B cell (primary cell): ENCODE measurements at regions of chr7 and their contacts with region 1.

Region 1: GRCh38 chr7:95527033-95527775 is 41.5 kb downstream of the ASB4 start:
- DNase-seq: peak; percentile 69
- ATAC-seq: peak; percentile 69
- H3K4me3 ChIP-seq: no peak overlapping the region
- H3K4me3 Mint-ChIP-seq: no peak overlapping the region
- H3K27ac ChIP-seq: no peak overlapping the region
- H3K27ac Mint-ChIP-seq: no peak overlapping the region
- H3K4me1 ChIP-seq: no peaks in the 10 kb centered on the region
- H3K4me1 Mint-ChIP-seq: peaks cover 3% of the 10 kb centered on the region
- H3K27me3 ChIP-seq: no peaks in the 10 kb centered on the region
- H3K27me3 Mint-ChIP-seq: peaks cover 8% of the 10 kb centered on the region
- CTCF ChIP-seq: peak; percentile 91

Region 2: GRCh38 chr7:95485391-95486123 is 41.6 kb before region 1 on chr7 and contains the start of gene ASB4:
- CTCF ChIA-PET with region 1: no interaction called
- POLR2A ChIA-PET with region 1: no interaction called
- intact Hi-C with region 1: no loop called
- DNase-seq: no peak
- ATAC-seq: no peak
- H3K4me3 ChIP-seq: no peak within 1 kb of the TSS
- H3K4me3 Mint-ChIP-seq: no peak within 1 kb of the TSS
- H3K27ac ChIP-seq: no peak within 1 kb of the TSS
- H3K27ac Mint-ChIP-seq: no peak within 1 kb of the TSS
- H3K4me1 ChIP-seq: no peaks in the 10 kb centered on the region
- H3K4me1 Mint-ChIP-seq: no peaks in the 10 kb centered on the region
- H3K27me3 ChIP-seq: no peaks in the 10 kb centered on the region
- H3K27me3 Mint-ChIP-seq: peaks cover 20% of the 10 kb centered on the region
- CTCF ChIP-seq: no peak
- total RNA-seq, gene ASB4: not detected in 2 replicates

Region 3: DNA sequence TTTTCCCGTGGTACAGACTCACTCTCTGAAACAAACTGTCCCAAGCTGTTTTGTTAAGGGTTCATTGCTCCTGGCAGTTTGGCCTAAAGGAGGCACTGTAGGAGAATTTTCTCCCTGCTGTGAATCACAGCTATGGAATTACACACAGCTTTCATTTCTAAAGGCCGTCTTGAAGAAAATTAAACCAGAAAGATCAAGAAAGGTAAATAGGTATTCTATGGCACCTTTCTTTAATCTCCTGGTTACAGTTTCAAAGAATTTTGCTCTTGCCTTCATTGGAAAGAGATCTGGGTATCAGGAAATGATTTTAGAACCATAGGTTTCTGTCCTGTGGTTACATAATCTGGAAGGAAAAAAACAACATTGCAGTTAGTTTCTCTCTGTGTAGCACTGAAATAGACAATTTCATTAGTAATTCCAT is 17.9 kb after region 1 on chr7:
- CTCF ChIA-PET with region 1: interaction called, 97 read pairs
- POLR2A ChIA-PET with region 1: no interaction called
- intact Hi-C with region 1: no loop called
- DNase-seq: peak; percentile 26
- ATAC-seq: no peak
- H3K4me3 ChIP-seq: no peak overlapping the region
- H3K4me3 Mint-ChIP-seq: peak overlapping the region; percentile 0
- H3K27ac ChIP-seq: no peak overlapping the region
- H3K27ac Mint-ChIP-seq: no peak overlapping the region
- H3K4me1 ChIP-seq: peaks cover 3 to 8% of the 10 kb centered on the region in 2 donors
- H3K4me1 Mint-ChIP-seq: peaks cover 9% of the 10 kb centered on the region
- H3K27me3 ChIP-seq: no peaks in the 10 kb centered on the region
- H3K27me3 Mint-ChIP-seq: peaks cover 3% of the 10 kb centered on the region
- CTCF ChIP-seq: no peak

Region 4: GRCh38 chr7:95684037-95684436 is 156.8 kb after region 1 on chr7:
- CTCF ChIA-PET with region 1: interaction called, 681 read pairs
- POLR2A ChIA-PET with region 1: interaction called, 3 read pairs
- intact Hi-C with region 1: loop called (anchors 1 kb)
- DNase-seq: peak; percentile 41
- ATAC-seq: no peak
- H3K4me3 ChIP-seq: no peak overlapping the region
- H3K4me3 Mint-ChIP-seq: no peak overlapping the region
- H3K27ac ChIP-seq: no peak overlapping the region
- H3K27ac Mint-ChIP-seq: no peak overlapping the region
- H3K4me1 ChIP-seq: no peaks in the 10 kb centered on the region
- H3K4me1 Mint-ChIP-seq: peaks cover 1% of the 10 kb centered on the region
- H3K27me3 ChIP-seq: no peaks in the 10 kb centered on the region
- H3K27me3 Mint-ChIP-seq: no peaks in the 10 kb centered on the region
- CTCF ChIP-seq: no peak

Region 5: DNA sequence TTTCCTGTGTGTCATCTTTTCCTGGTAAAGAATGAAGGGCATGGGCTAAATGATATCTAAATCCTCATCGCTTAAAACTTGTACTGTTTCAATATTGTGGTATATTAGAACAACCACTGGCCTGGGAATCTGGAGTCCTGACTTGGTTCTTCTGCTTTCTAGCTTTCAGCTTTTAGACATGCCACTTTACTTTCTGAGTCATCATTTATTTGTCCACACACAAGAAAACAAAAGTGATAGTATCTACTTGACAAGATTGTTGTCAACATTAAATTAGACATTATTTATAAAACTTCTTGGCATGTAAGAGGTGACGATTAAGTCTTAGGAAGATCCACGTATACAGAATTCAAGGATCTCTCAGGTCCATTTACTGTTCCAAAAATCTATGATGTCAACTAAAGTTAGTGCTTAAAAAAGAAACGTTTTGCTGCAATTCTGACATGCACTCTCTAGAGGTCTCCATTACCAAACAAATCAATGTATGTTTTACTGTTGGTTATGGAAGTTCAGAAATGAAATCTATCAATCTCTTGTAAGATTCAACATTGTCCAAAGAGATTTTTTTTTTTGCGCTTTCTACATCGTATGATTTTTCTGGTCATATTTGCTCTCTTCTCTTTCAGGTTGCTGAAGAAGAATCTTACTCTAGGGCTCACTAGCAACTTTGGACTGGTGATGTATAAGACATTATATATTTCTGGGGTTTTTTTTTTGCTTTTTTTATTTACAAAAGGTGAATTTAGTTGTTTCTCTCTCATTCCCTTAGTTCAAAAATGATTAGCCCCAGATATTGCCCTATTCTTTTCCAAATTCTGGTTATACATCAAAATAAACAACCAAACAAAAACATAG is 191.6 kb after region 1 on chr7:
- CTCF ChIA-PET with region 1: no interaction called
- POLR2A ChIA-PET with region 1: no interaction called
- intact Hi-C with region 1: no loop called
- DNase-seq: no peak
- ATAC-seq: no peak
- H3K4me3 ChIP-seq: no peak overlapping the region
- H3K4me3 Mint-ChIP-seq: no peak overlapping the region
- H3K27ac ChIP-seq: no peak overlapping the region
- H3K27ac Mint-ChIP-seq: no peak overlapping the region
- H3K4me1 ChIP-seq: peaks cover 0 to 8% of the 10 kb centered on the region in 2 donors
- H3K4me1 Mint-ChIP-seq: peaks cover 13% of the 10 kb centered on the region
- H3K27me3 ChIP-seq: peaks cover 0 to 9% (median 3%) of the 10 kb centered on the region in 4 experiments
- H3K27me3 Mint-ChIP-seq: peaks cover 19% of the 10 kb centered on the region
- CTCF ChIP-seq: no peak

Region 6: DNA sequence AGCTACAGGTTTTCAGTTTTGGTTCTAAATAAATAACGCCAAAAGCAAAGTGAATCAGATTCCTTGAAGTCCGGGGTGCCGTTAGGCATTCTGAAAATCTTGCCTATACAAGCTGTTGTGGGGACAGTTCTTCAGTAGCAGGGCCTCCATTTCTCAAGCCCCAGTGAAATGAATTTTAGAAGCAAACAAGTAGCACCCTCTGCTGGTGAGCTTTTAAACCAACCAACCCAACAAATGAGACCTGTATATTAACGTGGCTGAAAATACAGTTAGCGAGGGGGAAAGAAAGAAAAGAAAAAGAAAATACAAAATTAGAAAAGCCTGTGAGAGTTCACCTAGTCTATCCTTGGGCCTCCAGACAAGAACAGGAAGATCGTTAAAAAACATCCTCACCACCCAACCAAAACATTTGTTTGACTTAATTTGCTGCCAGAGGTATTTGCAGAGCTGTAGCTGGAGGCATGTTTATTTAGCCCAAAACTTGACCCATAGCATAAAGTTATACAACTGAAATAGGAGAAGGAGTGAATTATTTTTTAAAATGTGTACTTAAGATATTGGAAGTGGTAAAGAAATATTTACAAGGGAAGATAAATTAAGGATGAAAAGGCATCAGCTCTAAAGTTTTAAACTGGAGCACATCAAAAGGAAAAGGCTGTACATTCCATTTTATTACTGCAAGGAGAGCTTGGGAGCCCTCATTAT is 344.0 kb after region 1 on chr7:
- CTCF ChIA-PET with region 1: interaction called, 3 read pairs
- POLR2A ChIA-PET with region 1: no interaction called
- intact Hi-C with region 1: loop called (anchors 5 kb)
- DNase-seq: peak; percentile 18
- ATAC-seq: no peak
- H3K4me3 ChIP-seq: no peak overlapping the region
- H3K4me3 Mint-ChIP-seq: no peak overlapping the region
- H3K27ac ChIP-seq: no peak overlapping the region
- H3K27ac Mint-ChIP-seq: no peak overlapping the region
- H3K4me1 ChIP-seq: no peaks in the 10 kb centered on the region
- H3K4me1 Mint-ChIP-seq: no peaks in the 10 kb centered on the region
- H3K27me3 ChIP-seq: peaks cover 0 to 4% (median 0%) of the 10 kb centered on the region in 4 experiments
- H3K27me3 Mint-ChIP-seq: peaks cover 19% of the 10 kb centered on the region
- CTCF ChIP-seq: peak; percentile 52